ENCODE measurements at regions of chr2 and their contacts with region 1.

Region 1: GRCh38 chr2:142863485-142863961 is 13.9 kb upstream of the KYNU start:
- DNase-seq: no peak
- H3K4me3 ChIP-seq: no peak overlapping the region
- H3K27ac ChIP-seq: no peak overlapping the region
- H3K4me1 ChIP-seq: no peaks in the 10 kb centered on the region
- H3K27me3 ChIP-seq: no peaks in the 10 kb centered on the region
- CTCF ChIP-seq: no peak
- EP300 ChIP-seq: no peak
- POLR2A ChIP-seq: no peak

Region 2: GRCh38 chr2:142707318-142707717 is 156.2 kb before region 1 on chr2:
- intact Hi-C with region 1: loop called in 1 of 4 experiments (anchors 5 kb)
- DNase-seq: no peak
- H3K4me3 ChIP-seq: no peak overlapping the region
- H3K27ac ChIP-seq: no peak overlapping the region
- H3K4me1 ChIP-seq: no peaks in the 10 kb centered on the region
- H3K27me3 ChIP-seq: no peaks in the 10 kb centered on the region
- CTCF ChIP-seq: no peak
- EP300 ChIP-seq: no peak
- POLR2A ChIP-seq: no peak